ENCODE measurements at regions of chr6 and their contacts with region 1.

Region 1: DNA sequence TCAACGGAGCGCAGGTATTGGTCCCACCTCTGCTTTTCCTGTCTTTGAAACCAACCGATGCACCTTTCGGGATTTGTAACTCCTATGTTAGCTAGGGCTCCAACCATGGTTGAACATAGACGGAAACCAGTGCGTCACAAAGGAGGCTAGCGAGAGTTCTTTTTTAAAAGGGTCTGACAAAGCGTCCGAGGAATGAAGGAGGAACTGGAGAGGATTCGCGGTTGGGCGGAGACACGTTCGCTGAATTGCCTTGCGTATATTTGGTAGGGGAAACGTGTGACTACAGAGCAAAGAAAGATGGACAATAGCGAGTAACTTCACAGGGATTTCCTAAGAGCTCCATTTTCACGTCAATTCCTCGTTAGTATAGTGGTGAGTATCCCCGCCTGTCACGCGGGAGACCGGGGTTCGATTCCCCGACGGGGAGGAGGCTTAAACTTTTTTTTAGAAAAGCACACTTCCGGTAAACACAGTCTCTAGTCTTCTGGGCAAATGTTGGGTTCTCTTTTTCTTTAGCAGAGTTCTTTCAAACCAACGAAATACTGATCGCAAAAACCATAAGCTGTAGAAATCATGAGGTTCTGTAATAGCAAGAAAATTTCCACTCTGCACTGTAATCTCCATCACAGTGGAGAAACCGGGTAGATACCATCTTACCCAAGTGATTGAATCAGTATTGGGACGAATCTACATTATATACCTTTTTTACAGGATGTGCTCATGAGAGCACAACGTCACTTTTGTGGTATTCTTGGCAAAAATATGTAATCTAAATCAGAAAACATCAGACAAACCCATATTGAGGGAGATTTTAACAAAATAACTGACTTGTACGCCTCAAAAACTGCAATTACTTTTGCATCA is 6.6 kb upstream of the ZNF184 start:
- DNase-seq: peak; percentile 49 to 53
- ATAC-seq: peak; percentile 87 to 89
- H3K4me3 ChIP-seq: peak overlapping the region; percentile 71 to 87 (median 80)
- H3K27ac ChIP-seq: peak overlapping the region; percentile 89 to 94 (median 90)
- H3K4me1 ChIP-seq: peaks cover 0 to 11% of the 10 kb centered on the region in 2 donors
- H3K27me3 ChIP-seq: no peaks in the 10 kb centered on the region
- CTCF ChIP-seq: no peak
- POLR2A ChIP-seq: peak; percentile 23 to 36

Region 2: GRCh38 chr6:27177485-27178406 is 301.8 kb before region 1 on chr6:
- in situ Hi-C with region 1: loop called in 1 of 4 experiments (anchors 10 kb)
- intact Hi-C with region 1: loop called (anchors 5 kb)
- DNase-seq: peak; percentile 29 to 55
- ATAC-seq: peak; percentile 68 to 74
- H3K4me3 ChIP-seq: peak overlapping the region; percentile 81 to 92 (median 84)
- H3K27ac ChIP-seq: peak overlapping the region; percentile 55 to 72 (median 62)
- H3K4me1 ChIP-seq: peaks cover 5% of the 10 kb centered on the region in 2 donors
- H3K27me3 ChIP-seq: peaks cover 0 to 2% (median 0%) of the 10 kb centered on the region in 3 donors
- CTCF ChIP-seq: peak in 2 of 5 experiments; percentile 30 to 48
- POLR2A ChIP-seq: peak in 1 of 2 donors; percentile 18

Region 3: DNA sequence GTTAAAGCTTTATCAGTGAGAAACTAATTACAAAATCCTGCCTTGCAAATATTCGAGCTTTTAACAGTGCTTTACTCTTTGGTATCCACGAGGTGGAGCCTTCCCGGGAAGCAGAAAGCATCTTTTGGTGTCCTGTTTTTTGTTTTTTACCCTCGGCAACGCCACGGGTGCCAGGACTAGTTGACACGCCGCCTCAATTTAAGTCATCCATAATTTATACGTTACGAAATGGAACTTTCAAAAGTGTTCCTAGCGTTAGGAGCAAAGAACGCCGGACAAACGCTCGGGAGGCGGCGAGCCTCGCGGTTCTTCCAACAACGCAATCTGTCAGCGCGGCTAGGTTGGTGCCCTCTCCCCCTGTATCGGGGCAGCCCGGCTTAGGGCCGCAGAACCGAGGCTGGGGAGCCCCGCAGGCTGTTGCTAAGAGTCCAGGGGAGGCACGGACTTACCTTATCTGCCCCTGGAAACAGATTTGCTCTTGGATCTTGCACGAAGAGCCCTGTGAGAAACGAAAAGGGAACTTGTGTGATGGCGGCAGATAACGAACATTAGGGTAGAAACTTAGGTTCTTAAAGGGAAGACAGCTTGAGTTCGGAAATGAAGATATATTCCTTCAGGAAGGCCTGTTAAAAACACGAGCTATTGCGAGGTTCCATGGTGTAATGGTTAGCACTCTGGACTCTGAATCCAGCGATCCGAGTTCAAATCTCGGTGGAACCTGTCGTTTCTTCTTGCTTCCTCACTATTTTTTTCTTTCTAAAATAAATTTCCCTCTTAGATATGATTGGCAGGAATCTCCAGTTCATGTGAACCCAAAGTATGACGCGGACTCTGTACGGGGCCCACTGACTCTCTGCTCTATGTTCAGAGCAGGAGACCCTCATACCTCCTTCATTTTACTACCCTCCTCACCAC is 39.6 kb after region 1 on chr6:
- in situ Hi-C with region 1: no loop called
- intact Hi-C with region 1: loop called (anchors 1 kb)
- DNase-seq: peak; percentile 18 to 29
- ATAC-seq: peak; percentile 88 to 89
- H3K4me3 ChIP-seq: peak overlapping the region; percentile 65 to 88 (median 76)
- H3K27ac ChIP-seq: peak overlapping the region; percentile 77 to 82 (median 79)
- H3K4me1 ChIP-seq: peaks cover 6 to 7% of the 10 kb centered on the region in 2 donors
- H3K27me3 ChIP-seq: peaks cover 4 to 11% (median 8%) of the 10 kb centered on the region in 3 donors
- CTCF ChIP-seq: peak in 4 of 5 experiments; percentile 32 to 65 (median 59)
- POLR2A ChIP-seq: no peak

Region 4: DNA sequence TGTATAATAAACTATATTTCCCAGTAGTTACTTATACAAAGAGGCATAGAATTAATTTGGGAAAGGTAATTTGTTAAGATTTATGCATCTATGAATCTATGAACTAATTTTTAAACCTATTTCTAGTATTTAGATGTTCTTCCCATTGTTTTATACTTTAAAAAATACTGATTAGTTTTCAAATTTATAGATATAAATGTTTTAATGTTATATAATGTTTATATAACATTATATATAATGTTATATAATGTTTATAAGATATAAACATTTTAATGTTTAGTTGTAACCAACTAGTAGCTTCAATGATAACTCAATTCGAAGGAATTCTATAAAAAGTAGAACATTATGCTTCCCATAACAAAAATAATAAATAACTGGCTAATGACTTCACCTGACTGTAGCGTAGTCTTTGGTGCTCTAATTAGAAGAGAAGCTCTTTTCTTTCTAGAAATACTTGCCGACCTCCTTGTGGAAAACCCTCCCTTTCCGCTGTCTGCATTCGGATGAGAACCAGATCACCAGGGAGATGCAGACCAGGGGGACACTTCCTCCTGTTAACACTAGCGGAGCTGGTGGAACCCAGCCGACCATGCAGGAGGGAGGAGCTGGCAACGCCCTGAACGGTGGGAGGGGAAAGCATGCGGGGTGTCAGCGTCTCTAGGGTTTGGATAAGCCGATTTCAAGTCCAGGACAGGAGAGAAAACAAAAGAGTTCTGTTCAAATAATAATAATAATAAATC is 274.3 kb after region 1 on chr6:
- in situ Hi-C with region 1: no loop called
- intact Hi-C with region 1: loop called (anchors 1 kb)
- DNase-seq: peak in 1 of 2 donors; percentile 18
- ATAC-seq: no peak
- H3K4me3 ChIP-seq: peak overlapping the region; percentile 68 to 79 (median 73)
- H3K27ac ChIP-seq: no peak overlapping the region
- H3K4me1 ChIP-seq: no peaks in the 10 kb centered on the region
- H3K27me3 ChIP-seq: peaks cover 13 to 22% (median 21%) of the 10 kb centered on the region in 3 donors
- CTCF ChIP-seq: no peak
- POLR2A ChIP-seq: no peak

Region 5: GRCh38 chr6:27902335-27903314 is 423.1 kb after region 1 on chr6:
- in situ Hi-C with region 1: loop called in 2 of 4 experiments (anchors 10 kb)
- intact Hi-C with region 1: loop called (anchors 2 kb)
- DNase-seq: peak; percentile 53 to 60
- ATAC-seq: peak; percentile 94
- H3K4me3 ChIP-seq: peak overlapping the region; percentile 51 to 60 (median 56)
- H3K27ac ChIP-seq: peak overlapping the region; percentile 74 to 82 (median 79)
- H3K4me1 ChIP-seq: no peaks in the 10 kb centered on the region
- H3K27me3 ChIP-seq: no peaks in the 10 kb centered on the region
- CTCF ChIP-seq: no peak
- POLR2A ChIP-seq: no peak

Region 6: GRCh38 chr6:28266962-28267694 is 787.6 kb after region 1 on chr6 and contains the start of gene ZSCAN26:
- in situ Hi-C with region 1: no loop called
- intact Hi-C with region 1: loop called (anchors 5 kb)
- DNase-seq: peak; percentile 64 to 71
- ATAC-seq: peak; percentile 97 to 99
- H3K4me3 ChIP-seq: peak within 1 kb of the TSS; percentile 70 to 98 (median 92)
- H3K27ac ChIP-seq: peak within 1 kb of the TSS; percentile 76 to 81 (median 80)
- H3K4me1 ChIP-seq: peaks cover 15 to 27% of the 10 kb centered on the region in 2 donors
- H3K27me3 ChIP-seq: no peaks in the 10 kb centered on the region
- CTCF ChIP-seq: no peak
- POLR2A ChIP-seq: peak in 1 of 2 donors; percentile 22
- total RNA-seq, gene ZSCAN26: 7.3 to 13.4 (median 9.8) TPM